A549 (cell line): ENCODE measurements at regions of chr7 and their contacts with region 1.

Region 1: DNA sequence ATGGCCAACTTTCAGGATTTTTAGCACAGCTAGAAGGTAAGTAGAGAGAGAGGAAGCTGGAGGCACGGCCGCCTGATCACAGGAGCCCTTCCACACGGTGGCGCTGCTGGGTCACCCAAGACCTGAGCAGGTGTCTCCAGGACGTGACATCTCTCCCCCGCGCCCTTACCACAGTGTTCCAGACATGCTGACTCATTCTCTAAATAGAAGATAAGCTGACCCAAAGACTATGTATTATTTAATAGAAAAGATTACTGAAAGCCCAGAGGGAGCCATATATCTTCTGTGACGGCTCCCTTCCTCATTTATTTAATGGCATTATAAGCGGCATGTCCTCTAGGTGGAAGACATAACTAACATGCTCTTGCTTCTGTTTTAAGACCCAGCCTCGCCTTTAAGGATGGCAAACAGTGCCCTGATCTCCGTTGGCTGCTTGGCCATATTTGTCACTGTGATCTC is 26.0 kb upstream of the MALSU1 start:
- DNase-seq: peak; percentile 83 to 97
- ATAC-seq: peak; percentile 97
- H3K4me3 ChIP-seq: peak overlapping the region; percentile 23; the same call in 1 of the 3 replicates
- H3K27ac ChIP-seq: peak overlapping the region; percentile 76
- H3K4me1 ChIP-seq: peaks cover 22% of the 10 kb centered on the region
- CTCF ChIP-seq: peak; percentile 95
- EP300 ChIP-seq: no peak
- POLR2A ChIP-seq: no peak
- RAD21 ChIP-seq: peak; percentile 89 to 93

Region 2: DNA sequence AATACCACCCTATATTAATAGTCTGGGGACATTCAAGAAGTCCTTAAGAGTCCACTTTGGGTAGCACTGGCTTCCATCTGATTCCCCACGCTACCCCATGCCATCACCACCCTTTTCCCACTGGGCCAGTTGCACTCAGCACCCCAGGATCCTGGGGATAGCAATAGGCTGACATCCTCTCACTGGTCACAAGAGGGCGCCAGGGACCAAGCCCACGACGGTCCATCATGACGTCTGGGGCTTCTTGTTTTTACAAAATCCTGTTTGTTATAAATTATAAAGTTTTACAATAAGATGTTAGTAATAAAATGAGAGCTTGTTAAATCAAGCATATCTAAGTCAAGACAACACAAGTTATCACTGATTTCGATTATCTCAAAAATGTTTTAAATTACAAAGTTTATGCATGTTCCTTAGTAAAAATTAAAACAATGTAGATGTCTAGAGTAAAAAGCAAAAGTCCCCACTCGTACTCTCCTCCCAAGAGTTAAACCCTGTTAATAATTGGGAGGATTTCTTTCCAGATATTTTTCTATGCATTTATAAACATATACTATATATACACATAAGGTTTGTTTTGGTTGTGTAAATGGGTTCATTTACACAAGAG is 11.2 kb before region 1 on chr7:
- CTCF ChIA-PET with region 1: interaction called, 108 read pairs
- POLR2A ChIA-PET with region 1: no interaction called
- DNase-seq: peak; percentile 76 to 90
- ATAC-seq: peak; percentile 98 to 99
- H3K4me3 ChIP-seq: no peak overlapping the region
- H3K27ac ChIP-seq: no peak overlapping the region
- H3K4me1 ChIP-seq: no peaks in the 10 kb centered on the region
- CTCF ChIP-seq: peak; percentile 90
- EP300 ChIP-seq: no peak
- POLR2A ChIP-seq: no peak
- RAD21 ChIP-seq: peak; percentile 80 to 89

Region 3: GRCh38 chr7:23315366-23315765 is 42.2 kb after region 1 on chr7:
- CTCF ChIA-PET with region 1: interaction called, 13 read pairs
- POLR2A ChIA-PET with region 1: no interaction called
- DNase-seq: no peak
- ATAC-seq: no peak
- H3K4me3 ChIP-seq: no peak overlapping the region
- H3K27ac ChIP-seq: no peak overlapping the region
- H3K4me1 ChIP-seq: no peaks in the 10 kb centered on the region
- CTCF ChIP-seq: no peak
- EP300 ChIP-seq: no peak
- POLR2A ChIP-seq: no peak
- RAD21 ChIP-seq: no peak

Region 4: DNA sequence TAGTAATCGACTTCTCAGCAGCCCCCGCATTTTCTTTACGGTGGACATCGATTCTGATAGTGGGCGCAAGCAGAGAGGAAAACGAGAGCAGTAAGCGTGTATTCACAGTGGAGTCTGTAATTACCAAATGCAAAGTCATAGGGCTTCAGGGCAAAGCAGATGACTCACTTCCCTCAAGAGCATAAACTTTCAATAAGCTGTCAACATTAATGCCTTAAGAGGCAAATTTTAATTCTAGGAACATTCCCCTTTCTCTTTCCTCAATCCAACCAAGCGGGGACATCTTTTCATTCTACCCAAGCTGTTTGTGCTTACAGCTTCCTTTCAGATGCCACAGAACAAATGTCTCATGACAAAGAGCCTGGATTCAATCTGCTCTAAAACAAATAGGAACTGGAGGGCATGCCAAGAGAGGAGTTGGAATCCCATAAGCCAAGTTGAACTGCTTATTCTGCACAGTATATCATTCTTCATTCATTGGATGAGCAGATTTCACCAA is 74.6 kb after region 1 on chr7:
- CTCF ChIA-PET with region 1: interaction called, 12 read pairs
- POLR2A ChIA-PET with region 1: no interaction called
- DNase-seq: peak; percentile 55 to 60
- ATAC-seq: peak; percentile 87 to 92
- H3K4me3 ChIP-seq: 0 out of 3 replicates have a peak overlapping the region, but pooled peaks have one; percentile 5
- H3K27ac ChIP-seq: peak overlapping the region; percentile 31 to 73; a peak in 5 of 6 replicates
- H3K4me1 ChIP-seq: peaks cover 40% of the 10 kb centered on the region
- CTCF ChIP-seq: no peak
- EP300 ChIP-seq: no peak
- POLR2A ChIP-seq: no peak
- RAD21 ChIP-seq: no peak

Region 5: DNA sequence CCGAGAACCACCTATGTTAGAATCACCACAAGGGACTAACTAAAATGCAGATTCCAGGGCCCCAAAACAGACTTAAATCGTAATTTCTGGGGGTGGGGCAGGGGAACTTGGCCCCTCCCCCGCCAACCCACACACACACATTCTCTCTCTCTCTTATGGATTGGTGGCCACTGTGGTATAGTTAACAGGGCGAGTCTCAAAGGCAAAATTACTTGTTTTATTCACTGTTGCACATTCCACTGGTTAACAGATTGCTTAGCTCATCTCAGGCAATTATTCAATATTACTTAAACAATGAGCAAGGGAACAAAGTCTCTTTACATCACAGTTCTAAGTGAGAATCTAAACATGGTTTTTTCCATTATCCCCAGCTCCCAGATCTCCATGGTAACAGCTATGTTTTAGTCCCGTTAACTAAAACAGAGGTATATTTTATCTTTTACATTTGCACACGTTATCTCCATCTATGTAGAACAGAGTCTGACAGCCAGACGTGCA is 158.6 kb after region 1 on chr7:
- CTCF ChIA-PET with region 1: interaction called, 33 read pairs
- POLR2A ChIA-PET with region 1: no interaction called
- DNase-seq: peak in 1 of 2 experiments; percentile 20
- ATAC-seq: no peak
- H3K4me3 ChIP-seq: no peak overlapping the region
- H3K27ac ChIP-seq: peak overlapping the region; percentile 64 to 78; a peak in 5 of 6 replicates
- H3K4me1 ChIP-seq: peaks cover 42% of the 10 kb centered on the region
- CTCF ChIP-seq: no peak
- EP300 ChIP-seq: no peak
- POLR2A ChIP-seq: no peak
- RAD21 ChIP-seq: no peak

Region 6: DNA sequence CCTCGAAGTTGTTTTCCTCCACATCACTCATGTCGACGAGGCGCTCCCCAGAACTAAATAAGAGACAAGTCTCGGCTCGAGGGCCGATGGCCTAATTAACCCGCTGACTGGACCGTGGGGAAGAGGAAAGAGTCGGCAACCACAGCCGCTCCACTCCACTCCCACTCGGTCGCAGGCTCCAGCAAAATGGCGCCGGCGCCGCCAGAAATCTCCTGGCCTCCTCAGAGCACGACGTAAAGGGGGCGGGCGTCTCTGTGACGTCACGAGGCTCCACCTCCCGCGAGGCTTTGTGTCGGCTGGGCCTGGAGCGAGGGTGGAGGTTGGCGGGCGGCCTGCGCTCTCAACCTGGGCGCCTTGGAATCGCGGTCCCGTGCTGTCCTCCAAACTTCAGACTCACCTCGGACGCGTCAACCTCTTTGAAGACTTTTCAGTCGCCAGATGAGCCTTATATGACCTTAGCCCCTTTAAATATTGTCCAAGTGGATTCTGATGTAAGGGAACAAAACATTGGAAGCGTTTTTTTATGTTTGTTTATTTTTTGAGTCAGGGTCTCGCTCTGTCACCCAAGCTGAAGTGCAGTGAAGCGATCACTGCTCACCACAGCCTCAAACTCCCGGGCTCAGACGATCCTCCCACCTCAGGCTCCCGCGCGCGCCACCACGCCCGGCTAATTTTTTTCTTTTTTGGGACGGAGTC is 258.8 kb after region 1 on chr7 and contains the start of gene TRA2A:
- CTCF ChIA-PET with region 1: interaction called, 11 read pairs
- POLR2A ChIA-PET with region 1: interaction called, 3 read pairs
- DNase-seq: peak; percentile 90 to 96
- ATAC-seq: peak; percentile 95
- H3K4me3 ChIP-seq: peak within 1 kb of the TSS; percentile 74
- H3K27ac ChIP-seq: peak within 1 kb of the TSS; percentile 93 to 97
- H3K4me1 ChIP-seq: peaks cover 39% of the 10 kb centered on the region; the same call in 2 of the 3 replicates
- CTCF ChIP-seq: no peak; the same call in 2 of the 3 replicates
- EP300 ChIP-seq: no peak
- POLR2A ChIP-seq: peak; percentile 97
- RAD21 ChIP-seq: no peak
- polyA plus RNA-seq, gene TRA2A: 85.5 and 90.8 TPM in 2 replicates

Region 7: GRCh38 chr7:23546897-23547572 is 273.9 kb after region 1 on chr7:
- CTCF ChIA-PET with region 1: interaction called, 67 read pairs
- POLR2A ChIA-PET with region 1: no interaction called
- DNase-seq: peak; percentile 86 to 93
- ATAC-seq: peak; percentile 92 to 94
- H3K4me3 ChIP-seq: no peak overlapping the region
- H3K27ac ChIP-seq: 0 out of 6 replicates have a peak overlapping the region, but pooled peaks of 1 of the 2 experiments have one; percentile 13
- H3K4me1 ChIP-seq: no peaks in the 10 kb centered on the region
- CTCF ChIP-seq: peak; percentile 99
- EP300 ChIP-seq: no peak
- POLR2A ChIP-seq: no peak
- RAD21 ChIP-seq: peak; percentile 92